CD14-positive monocyte (primary cell): ENCODE measurements at regions of chr16 and their contacts with region 1.

Region 1: DNA sequence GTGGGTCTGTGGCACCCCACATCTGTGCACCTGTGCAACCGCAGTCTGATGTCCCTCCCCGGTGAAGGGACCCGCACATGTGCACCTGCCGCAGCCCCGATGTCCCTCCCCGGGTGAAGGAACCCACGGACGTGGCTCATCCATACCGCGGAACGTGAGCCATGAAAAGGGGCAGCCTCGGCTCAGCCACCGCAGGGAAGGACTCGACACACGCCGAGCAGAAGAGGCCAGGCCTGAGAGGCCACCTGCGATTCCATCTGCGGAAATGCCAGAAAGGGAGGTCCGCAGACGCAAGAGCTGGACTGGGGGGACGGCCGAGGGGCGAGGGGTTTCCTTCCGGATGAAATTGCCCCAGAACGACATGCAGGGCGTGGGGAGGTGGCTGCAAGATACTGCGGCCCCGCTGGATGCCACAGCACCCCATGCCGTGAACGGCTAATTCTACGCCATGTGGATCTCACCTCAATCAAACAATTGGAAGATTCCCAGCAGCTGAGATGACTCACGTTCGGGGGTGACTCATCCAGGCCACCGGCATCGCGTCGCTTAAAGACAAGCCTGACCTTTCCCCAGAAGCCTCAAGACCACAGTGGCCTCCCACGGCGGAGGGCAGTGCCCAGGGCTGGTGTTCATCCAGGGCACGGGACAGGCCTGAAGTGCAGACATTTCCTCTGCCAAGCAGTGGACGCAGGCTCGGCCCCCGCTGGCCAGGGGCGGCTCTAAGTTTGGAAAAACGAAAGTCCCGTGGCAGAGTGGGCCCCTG is 21.0 kb downstream of the SOX8 start:
- DNase-seq: no peak
- H3K4me3 ChIP-seq: no peak overlapping the region
- H3K4me3 Mint-ChIP-seq: no peak overlapping the region
- H3K27ac ChIP-seq: no peak overlapping the region
- H3K27ac Mint-ChIP-seq: no peak overlapping the region
- H3K4me1 ChIP-seq: no peaks in the 10 kb centered on the region
- H3K4me1 Mint-ChIP-seq: no peaks in the 10 kb centered on the region
- H3K27me3 ChIP-seq: peaks cover 0 to 8% of the 10 kb centered on the region in 2 donors
- H3K27me3 Mint-ChIP-seq: peaks cover 14 to 17% (median 15%) of the 10 kb centered on the region in 3 donors
- CTCF ChIP-seq: no peak

Region 2: GRCh38 chr16:832652-833336 is 169.8 kb before region 1 on chr16:
- intact Hi-C with region 1: loop called in 1 of 2 experiments (anchors 5 kb)
- DNase-seq: no peak
- H3K4me3 ChIP-seq: no peak overlapping the region
- H3K4me3 Mint-ChIP-seq: no peak overlapping the region
- H3K27ac ChIP-seq: no peak overlapping the region
- H3K27ac Mint-ChIP-seq: no peak overlapping the region
- H3K4me1 ChIP-seq: no peaks in the 10 kb centered on the region
- H3K4me1 Mint-ChIP-seq: peaks cover 1% of the 10 kb centered on the region
- H3K27me3 ChIP-seq: no peaks in the 10 kb centered on the region
- H3K27me3 Mint-ChIP-seq: peaks cover 2 to 21% (median 10%) of the 10 kb centered on the region in 3 donors
- CTCF ChIP-seq: no peak